Esophagus muscularis mucosa (tissue), 4 donors: ENCODE measurements at regions of chr14 and their contacts with region 1.

Region 1: GRCh38 chr14:61475316-61475715 is 153.9 kb downstream of the PRKCH start:
- DNase-seq: no peak
- H3K4me3 ChIP-seq: no peak overlapping the region
- H3K27ac ChIP-seq: peak overlapping the region; percentile 28 to 76 (median 72)
- H3K4me1 ChIP-seq: peaks cover 72 to 81% (median 78%) of the 10 kb centered on the region in 4 donors
- H3K27me3 ChIP-seq: no peaks in the 10 kb centered on the region
- CTCF ChIP-seq: peak; percentile 55 to 74 (median 64)
- EP300 ChIP-seq: no peak
- POLR2A ChIP-seq: no peak

Region 2: GRCh38 chr14:61561657-61562276 is 86.5 kb after region 1 on chr14:
- intact Hi-C with region 1: loop called (anchors 5 kb)
- DNase-seq: no peak
- H3K4me3 ChIP-seq: no peak overlapping the region
- H3K27ac ChIP-seq: peak overlapping the region; percentile 63 to 76 (median 68)
- H3K4me1 ChIP-seq: peaks cover 37 to 54% (median 44%) of the 10 kb centered on the region in 4 donors
- H3K27me3 ChIP-seq: no peaks in the 10 kb centered on the region
- CTCF ChIP-seq: peak in 1 of 3 experiments; percentile 26
- EP300 ChIP-seq: peak; percentile 83
- POLR2A ChIP-seq: no peak

Region 3: DNA sequence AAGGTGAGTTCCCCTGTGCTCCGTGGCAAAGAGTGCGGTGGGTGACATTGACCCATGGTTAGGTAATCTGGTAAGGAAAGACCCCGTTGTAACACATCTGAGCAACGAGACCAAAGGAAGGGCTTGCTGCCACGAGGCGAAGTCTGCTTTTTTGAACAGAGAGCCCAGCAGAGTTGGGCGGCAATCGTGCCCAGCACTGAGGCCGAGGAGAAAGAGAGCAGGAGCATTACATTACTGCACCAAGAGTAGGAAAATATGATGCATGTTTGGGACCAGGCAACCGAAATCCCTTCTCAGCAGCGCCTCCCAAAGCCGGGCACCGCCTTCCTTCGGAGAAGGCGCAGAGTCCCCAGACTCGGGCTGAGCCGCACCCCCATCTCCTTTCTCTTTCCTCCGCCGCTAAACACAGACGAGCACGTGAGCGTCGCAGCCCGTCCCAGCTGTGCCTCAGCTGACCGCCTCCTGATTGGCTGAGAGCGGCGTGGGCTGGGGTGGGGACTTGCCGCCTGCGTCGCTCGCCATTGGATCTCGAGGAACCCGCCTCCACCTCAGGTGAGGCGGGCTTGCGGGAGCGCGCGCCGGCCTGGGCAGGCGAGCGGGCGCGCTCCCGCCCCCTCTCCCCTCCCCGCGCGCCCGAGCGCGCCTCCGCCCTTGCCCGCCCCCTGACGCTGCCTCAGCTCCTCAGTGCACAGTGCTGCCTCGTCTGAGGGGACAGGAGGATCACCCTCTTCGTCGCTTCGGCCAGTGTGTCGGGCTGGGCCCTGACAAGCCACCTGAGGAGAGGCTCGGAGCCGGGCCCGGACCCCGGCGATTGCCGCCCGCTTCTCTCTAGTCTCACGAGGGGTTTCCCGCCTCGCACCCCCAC is 219.7 kb after region 1 on chr14 and contains the start of gene HIF1A:
- intact Hi-C with region 1: loop called (anchors 10 kb)
- DNase-seq: peak; percentile 98
- H3K4me3 ChIP-seq: peak within 1 kb of the TSS; percentile 77 to 98 (median 88)
- H3K27ac ChIP-seq: peak within 1 kb of the TSS; percentile 88 to 100 (median 96)
- H3K4me1 ChIP-seq: peaks cover 15 to 40% (median 37%) of the 10 kb centered on the region in 4 donors
- H3K27me3 ChIP-seq: no peaks in the 10 kb centered on the region
- CTCF ChIP-seq: peak in 2 of 3 experiments; percentile 12 to 31
- EP300 ChIP-seq: no peak
- POLR2A ChIP-seq: peak; percentile 93
- total RNA-seq, gene HIF1A: 77.4 to 156 (median 86.5) TPM